Aorta (tissue), 5 donors: ENCODE measurements at regions of chr2 and their contacts with region 1.

Region 1: DNA sequence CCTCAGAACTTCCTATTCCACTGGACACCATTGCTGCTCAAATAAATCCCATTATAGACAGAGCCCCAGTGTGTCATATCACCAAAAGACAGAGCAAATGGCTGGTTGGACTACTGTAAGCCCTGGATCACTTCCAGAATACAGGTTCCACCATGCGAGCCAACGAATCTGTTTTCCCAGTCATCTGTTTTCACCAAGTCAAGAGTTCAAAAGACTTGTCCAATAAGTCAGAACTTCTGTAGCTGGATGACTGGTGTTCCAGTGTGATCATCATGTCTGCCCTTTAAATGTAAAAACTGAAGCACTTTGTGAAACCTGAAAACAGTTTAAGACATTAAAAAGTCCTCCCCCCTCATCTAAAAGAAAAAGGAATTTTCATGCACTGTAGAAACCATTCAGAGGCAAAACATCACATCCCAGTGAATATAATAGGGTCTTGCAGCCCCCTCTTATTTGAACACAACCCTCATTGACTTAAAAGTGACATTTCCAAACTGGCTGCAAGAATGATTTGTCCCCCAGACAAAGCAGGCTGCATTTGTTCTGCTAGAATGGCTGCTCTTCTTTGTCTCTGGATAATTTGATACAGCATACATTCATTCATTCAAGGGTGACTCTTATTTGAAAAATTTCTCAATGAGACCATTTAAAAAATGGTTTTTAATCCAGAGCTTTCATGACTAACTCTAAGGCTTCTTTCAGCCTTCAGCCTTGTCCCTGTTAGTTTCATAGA is 64.6 kb upstream of the TANC1 start:
- DNase-seq: no peak
- ATAC-seq: no peak
- H3K4me3 ChIP-seq: no peak overlapping the region
- H3K27ac ChIP-seq: no peak overlapping the region
- H3K4me1 ChIP-seq: no peaks in the 10 kb centered on the region
- H3K27me3 ChIP-seq: no peaks in the 10 kb centered on the region

Region 2: DNA sequence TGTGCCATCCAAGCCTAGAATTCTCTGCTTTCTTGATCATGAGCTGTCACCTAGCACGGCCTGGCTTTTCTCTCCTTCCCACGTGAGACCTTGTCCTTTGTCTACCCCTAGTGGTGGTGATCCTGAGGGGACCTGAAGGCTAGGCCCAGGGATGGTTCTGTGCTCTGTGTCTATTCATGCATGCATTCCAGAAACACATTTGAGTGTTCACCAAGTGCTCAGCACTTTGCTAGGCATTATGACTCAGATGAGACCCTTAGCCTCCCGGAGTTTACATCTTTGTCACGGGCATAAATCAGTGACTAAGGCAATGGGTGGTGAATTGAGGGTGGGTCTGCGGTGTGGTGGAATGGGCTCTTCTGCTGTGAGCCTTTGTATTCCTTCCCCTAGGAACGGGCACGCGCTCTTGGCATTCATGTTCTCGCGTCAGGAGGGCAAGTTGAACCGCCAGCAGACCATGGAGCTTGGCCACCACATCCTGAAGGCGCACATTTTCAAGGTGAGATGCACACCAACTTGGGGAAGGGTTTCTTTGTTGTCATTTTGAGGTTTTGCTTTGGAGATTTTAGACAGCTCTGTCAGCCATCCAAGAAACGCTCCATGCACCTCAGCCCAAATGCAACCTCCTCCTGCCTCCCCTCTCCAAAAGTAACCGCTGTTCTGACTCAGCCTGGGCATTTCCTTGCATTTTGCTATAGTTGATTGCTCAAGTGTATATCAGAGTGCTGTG is 281.7 kb after region 1 on chr2:
- intact Hi-C with region 1: loop called in 1 of 2 experiments (anchors 10 kb)
- DNase-seq: no peak
- ATAC-seq: no peak
- H3K4me3 ChIP-seq: no peak overlapping the region
- H3K27ac ChIP-seq: no peak overlapping the region
- H3K4me1 ChIP-seq: no peaks in the 10 kb centered on the region
- H3K27me3 ChIP-seq: no peaks in the 10 kb centered on the region